Endothelial cell of umbilical vein (primary cell): ENCODE measurements at regions of chr9 and their contacts with region 1.

Region 1: GRCh38 chr9:35732122-35732799 is at the starts of genes CREB3 and TLN1:
- DNase-seq: peak; percentile 99
- H3K4me3 ChIP-seq: peak within 1 kb of the TSS; percentile 46 to 92 (median 79)
- H3K27ac ChIP-seq: peak within 1 kb of the TSS; percentile 79
- H3K4me1 ChIP-seq: peaks cover 55% of the 10 kb centered on the region
- H3K27me3 ChIP-seq: no peaks in the 10 kb centered on the region
- CTCF ChIP-seq: peak in 1 of 2 donors; percentile 14
- POLR2A ChIP-seq: peak; percentile 48
- total RNA-seq, gene CREB3: 36.4 and 39.8 TPM in 2 replicates
- total RNA-seq, gene TLN1: 424 and 450 TPM in 2 replicates

Region 2: GRCh38 chr9:35690431-35691333 is 41.6 kb before region 1 on chr9:
- CTCF ChIA-PET with region 1: interaction called, 52 read pairs
- POLR2A ChIA-PET with region 1: interaction called, 7 read pairs
- dilution Hi-C with region 1: no loop called
- intact Hi-C with region 1: loop called (anchors 2 kb)
- DNase-seq: peak; percentile 72
- H3K4me3 ChIP-seq: peak overlapping the region; percentile 66 to 82 (median 70)
- H3K27ac ChIP-seq: peak overlapping the region; percentile 45
- H3K4me1 ChIP-seq: peaks cover 28% of the 10 kb centered on the region
- H3K27me3 ChIP-seq: no peaks in the 10 kb centered on the region
- CTCF ChIP-seq: no peak
- POLR2A ChIP-seq: peak; percentile 65

Region 3: GRCh38 chr9:35756275-35757225 is 24.3 kb after region 1 on chr9:
- CTCF ChIA-PET with region 1: interaction called, 15 read pairs
- POLR2A ChIA-PET with region 1: interaction called, 3 read pairs
- dilution Hi-C with region 1: no loop called
- intact Hi-C with region 1: loop called (anchors 1 kb)
- DNase-seq: peak; percentile 84
- H3K4me3 ChIP-seq: peak overlapping the region in 2 of 3 experiments; percentile 8 to 15
- H3K27ac ChIP-seq: peak overlapping the region; percentile 97
- H3K4me1 ChIP-seq: peaks cover 92% of the 10 kb centered on the region
- H3K27me3 ChIP-seq: no peaks in the 10 kb centered on the region
- CTCF ChIP-seq: peak; percentile 45 to 68
- POLR2A ChIP-seq: no peak

Region 4: GRCh38 chr9:35781066-35781465 is 48.8 kb after region 1 on chr9:
- CTCF ChIA-PET with region 1: interaction called, 13 read pairs
- POLR2A ChIA-PET with region 1: no interaction called
- dilution Hi-C with region 1: no loop called
- intact Hi-C with region 1: no loop called
- DNase-seq: no peak
- H3K4me3 ChIP-seq: no peak overlapping the region
- H3K27ac ChIP-seq: no peak overlapping the region
- H3K4me1 ChIP-seq: peaks cover 1% of the 10 kb centered on the region
- H3K27me3 ChIP-seq: no peaks in the 10 kb centered on the region
- CTCF ChIP-seq: no peak
- POLR2A ChIP-seq: no peak

Region 5: GRCh38 chr9:35882263-35882848 is 150.1 kb after region 1 on chr9:
- CTCF ChIA-PET with region 1: interaction called, 27 read pairs
- POLR2A ChIA-PET with region 1: no interaction called
- dilution Hi-C with region 1: no loop called
- intact Hi-C with region 1: loop called (anchors 5 kb)
- DNase-seq: peak; percentile 75
- H3K4me3 ChIP-seq: no peak overlapping the region
- H3K27ac ChIP-seq: no peak overlapping the region
- H3K4me1 ChIP-seq: peaks cover 5% of the 10 kb centered on the region
- H3K27me3 ChIP-seq: peaks cover 4 to 17% of the 10 kb centered on the region in 2 experiments
- CTCF ChIP-seq: peak; percentile 91 to 96
- POLR2A ChIP-seq: no peak

Region 6: DNA sequence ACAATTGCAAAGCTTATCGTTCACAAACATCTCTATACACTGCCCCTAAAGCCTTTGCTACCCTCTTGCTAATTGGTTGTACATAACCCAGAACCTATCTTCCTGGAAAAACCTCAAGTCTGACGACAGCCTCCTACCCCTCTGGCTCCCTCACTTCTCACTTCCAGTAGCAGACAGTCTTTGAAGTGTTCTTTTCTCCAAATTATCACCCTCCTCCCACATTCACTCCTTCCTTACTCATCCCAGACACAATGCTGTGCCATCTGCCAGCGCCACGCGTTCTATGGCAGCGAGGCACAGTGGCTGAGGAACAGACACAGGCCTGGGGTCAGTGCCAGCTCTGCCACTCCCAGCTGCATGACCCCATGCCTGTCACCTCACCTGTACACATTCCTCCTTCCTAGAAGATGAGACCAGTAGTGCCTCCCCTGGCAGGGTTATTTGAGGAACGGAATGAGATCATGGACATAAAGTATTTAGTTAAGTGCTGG is 486.2 kb after region 1 on chr9:
- CTCF ChIA-PET with region 1: no interaction called
- POLR2A ChIA-PET with region 1: no interaction called
- dilution Hi-C with region 1: no loop called
- intact Hi-C with region 1: no loop called
- DNase-seq: no peak
- H3K4me3 ChIP-seq: no peak overlapping the region
- H3K27ac ChIP-seq: no peak overlapping the region
- H3K4me1 ChIP-seq: peaks cover 6% of the 10 kb centered on the region
- H3K27me3 ChIP-seq: no peaks in the 10 kb centered on the region
- CTCF ChIP-seq: no peak
- POLR2A ChIP-seq: no peak